PC-9 (cell line): ENCODE measurements at regions of chr19 and their contacts with region 1.

Region 1: GRCh38 chr19:42108527-42109389 is 23.5 kb downstream of the POU2F2 start:
- DNase-seq: peak; percentile 70 to 83
- H3K4me3 ChIP-seq: no peak overlapping the region
- H3K27ac ChIP-seq: no peak overlapping the region
- H3K4me1 ChIP-seq: peaks cover 14% of the 10 kb centered on the region
- H3K27me3 ChIP-seq: no peaks in the 10 kb centered on the region
- CTCF ChIP-seq: peak; percentile 98

Region 2: GRCh38 chr19:42433503-42434260 is 324.9 kb after region 1 on chr19:
- CTCF ChIA-PET with region 1: no interaction called
- POLR2A ChIA-PET with region 1: no interaction called
- intact Hi-C with region 1: loop called (anchors 1 kb)
- DNase-seq: peak; percentile 55 to 76
- H3K4me3 ChIP-seq: no peak overlapping the region
- H3K27ac ChIP-seq: peak overlapping the region; percentile 45
- H3K4me1 ChIP-seq: peaks cover 9% of the 10 kb centered on the region
- H3K27me3 ChIP-seq: no peaks in the 10 kb centered on the region
- CTCF ChIP-seq: peak; percentile 78